AG04449 (cell line): ENCODE measurements at regions of chr11 and their contacts with region 1.

Region 1: DNA sequence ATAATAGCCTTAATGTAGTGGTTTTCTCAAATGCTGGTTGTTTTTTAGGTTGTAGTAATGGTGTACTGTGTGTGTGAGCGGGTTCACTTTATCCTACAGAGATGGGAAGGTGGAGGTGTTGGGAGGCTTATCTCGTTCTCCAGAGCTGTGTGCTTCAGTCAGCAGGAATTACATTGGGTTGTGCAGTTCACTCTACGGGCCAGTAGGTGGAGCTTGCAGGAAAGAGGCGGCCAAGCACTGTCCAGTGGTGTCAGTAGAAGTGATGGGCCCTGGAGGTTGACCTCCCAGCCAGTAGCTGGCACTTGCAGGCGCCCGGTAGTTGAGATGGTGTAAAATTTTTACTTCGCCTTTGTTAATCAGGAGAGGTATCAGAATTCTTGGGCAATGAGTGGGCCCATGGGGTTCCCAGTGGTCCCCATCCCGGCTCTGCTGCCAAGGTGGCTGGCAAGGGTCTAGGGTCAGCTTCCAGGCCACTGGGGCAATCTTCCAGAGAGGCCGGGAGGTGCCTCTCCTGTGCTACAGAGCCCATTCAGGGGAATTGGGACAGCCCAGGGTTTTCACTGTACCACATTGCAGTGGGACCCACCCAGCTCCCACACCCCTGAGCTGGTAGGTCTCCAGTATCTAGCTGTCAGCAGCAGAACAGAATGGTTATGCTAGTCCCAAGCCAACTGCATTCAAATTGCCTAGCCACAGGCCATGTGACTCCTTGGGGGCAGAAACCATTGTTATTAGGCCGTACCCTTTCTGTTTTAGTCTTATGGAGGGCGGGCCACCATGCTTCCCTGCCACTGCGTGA is 43.9 kb downstream of the BIRC2 start:
- DNase-seq: no peak
- H3K4me3 ChIP-seq: no peak overlapping the region
- CTCF ChIP-seq: peak; percentile 87

Region 2: DNA sequence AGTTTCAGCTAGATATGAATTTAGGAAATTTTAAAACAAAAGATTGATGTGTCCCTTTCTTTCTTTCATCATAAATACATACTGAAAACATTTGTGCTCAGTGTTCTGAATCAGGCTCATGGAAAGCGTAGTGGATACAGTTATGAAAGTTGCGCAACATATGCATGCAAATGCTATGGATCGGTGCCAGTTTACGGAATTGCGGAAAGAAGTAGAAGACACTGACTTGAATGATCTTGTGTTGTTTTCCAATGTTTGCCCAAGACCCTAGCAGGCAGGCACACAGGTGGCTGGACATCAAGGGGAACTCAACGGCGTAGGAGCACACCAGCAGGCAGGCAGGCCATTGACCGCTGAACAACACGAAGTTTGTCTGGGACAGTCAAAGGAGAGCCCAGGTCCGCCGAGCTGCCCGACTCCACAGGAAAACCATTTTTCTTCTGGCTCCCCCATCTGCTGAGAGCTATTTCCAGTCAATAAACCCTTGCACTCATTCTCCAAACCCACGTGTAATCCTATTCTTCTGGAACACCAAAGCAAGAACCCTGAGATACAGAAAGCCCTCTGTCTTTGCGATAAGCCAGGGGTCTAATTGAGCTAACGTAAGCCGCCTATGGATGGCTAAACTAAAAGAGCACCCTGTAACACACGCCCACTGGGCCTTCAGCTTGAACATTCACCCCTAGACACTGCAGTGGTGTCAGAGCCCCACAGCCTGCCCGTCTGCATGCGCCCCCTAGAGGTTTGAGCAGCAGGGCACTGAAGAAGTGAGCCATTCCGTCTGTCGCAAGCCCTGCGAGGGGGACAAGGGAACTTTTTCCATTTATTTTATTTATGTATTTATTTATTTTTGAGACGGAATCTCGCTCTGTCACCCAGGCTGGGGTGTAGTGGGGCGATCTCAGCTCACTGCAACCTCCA is 81.0 kb before region 1 on chr11:
- CTCF ChIA-PET with region 1: no interaction called
- POLR2A ChIA-PET with region 1: no interaction called
- DNase-seq: no peak
- H3K4me3 ChIP-seq: no peak overlapping the region
- CTCF ChIP-seq: no peak

Region 3: GRCh38 chr11:102346748-102347461 is 44.0 kb before region 1 on chr11 and contains the start of gene BIRC2:
- CTCF ChIA-PET with region 1: interaction called, 11 read pairs
- POLR2A ChIA-PET with region 1: no interaction called
- DNase-seq: no peak
- H3K4me3 ChIP-seq: peak within 1 kb of the TSS; percentile 82
- CTCF ChIP-seq: peak; percentile 94

Region 4: GRCh38 chr11:102375720-102376399 is 15.0 kb before region 1 on chr11:
- CTCF ChIA-PET with region 1: interaction called, 86 read pairs
- POLR2A ChIA-PET with region 1: no interaction called
- DNase-seq: no peak
- H3K4me3 ChIP-seq: no peak overlapping the region
- CTCF ChIP-seq: no peak

Region 5: DNA sequence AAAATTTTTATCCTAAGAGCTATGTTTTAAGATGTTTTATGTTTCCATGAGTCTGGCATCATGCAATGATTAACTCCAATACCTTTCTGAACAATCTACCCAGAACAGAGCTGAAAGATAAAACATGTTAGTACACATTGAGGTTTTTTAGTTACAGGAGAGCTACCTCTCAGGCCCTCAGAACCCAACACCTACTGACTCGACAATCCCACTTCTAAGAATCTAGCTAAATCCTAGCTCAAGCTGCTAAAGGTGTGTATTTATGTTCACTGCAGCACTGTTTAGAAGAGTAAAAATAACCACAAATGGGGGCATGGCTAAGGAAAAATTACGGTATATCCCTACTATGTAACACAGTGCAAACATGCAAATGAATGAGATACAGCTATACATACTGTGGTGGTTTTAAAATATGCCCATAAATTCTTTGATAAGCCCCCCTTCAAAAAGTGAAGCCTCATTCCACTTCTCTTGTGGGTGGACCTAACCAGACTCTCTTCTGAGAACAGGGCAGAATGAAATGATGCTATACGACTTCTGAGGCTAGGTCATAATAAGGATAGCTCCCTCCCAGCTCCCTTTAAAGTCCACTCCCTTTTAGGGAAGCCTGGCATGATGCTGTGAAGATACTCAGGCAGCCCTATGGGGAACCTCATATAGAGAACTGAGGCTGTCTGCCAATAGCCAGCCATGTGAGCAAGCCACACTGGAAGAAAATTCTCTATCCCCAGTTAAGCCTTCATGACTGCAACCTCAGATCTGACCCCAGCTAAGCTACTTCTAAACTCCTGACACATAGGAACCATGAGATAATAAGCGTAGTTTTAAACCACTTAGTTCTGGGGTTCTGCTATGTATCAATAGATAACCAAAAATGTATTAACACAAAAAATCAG is 32.2 kb after region 1 on chr11:
- CTCF ChIA-PET with region 1: interaction called, 13 read pairs
- POLR2A ChIA-PET with region 1: no interaction called
- DNase-seq: no peak
- H3K4me3 ChIP-seq: no peak overlapping the region
- CTCF ChIP-seq: no peak

Region 6: GRCh38 chr11:102495161-102496042 is 104.5 kb after region 1 on chr11:
- CTCF ChIA-PET with region 1: interaction called, 78 read pairs
- POLR2A ChIA-PET with region 1: no interaction called
- DNase-seq: peak; percentile 67
- H3K4me3 ChIP-seq: no peak overlapping the region
- CTCF ChIP-seq: peak; percentile 46